Naive thymus-derived CD4-positive, alpha-beta T cell (primary cell): ENCODE measurements at regions of chr2 and their contacts with region 1.

Region 1: GRCh38 chr2:64914735-64915509 is 74.3 kb upstream of the SLC1A4 start:
- DNase-seq: no peak
- ATAC-seq: peak; percentile 51
- H3K4me3 ChIP-seq: no peak overlapping the region
- H3K4me3 Mint-ChIP-seq: no peak overlapping the region
- H3K27ac ChIP-seq: no peak overlapping the region
- H3K27ac Mint-ChIP-seq: peak overlapping the region in 1 of 9 donors; percentile 34
- H3K4me1 ChIP-seq: peaks cover 6 to 15% of the 10 kb centered on the region in 2 donors
- H3K4me1 Mint-ChIP-seq: peaks cover 6 to 33% (median 20%) of the 10 kb centered on the region in 7 donors
- H3K27me3 ChIP-seq: no peaks in the 10 kb centered on the region
- H3K27me3 Mint-ChIP-seq: no peaks in the 10 kb centered on the region

Region 2: GRCh38 chr2:64945973-64946768 is 31.2 kb after region 1 on chr2:
- CTCF ChIA-PET with region 1: interaction called, 4 read pairs
- POLR2A ChIA-PET with region 1: no interaction called
- intact Hi-C with region 1: loop called (anchors 1 to 2 kb)
- DNase-seq: peak; percentile 19 to 74 (median 47)
- ATAC-seq: peak; percentile 93
- H3K4me3 ChIP-seq: peak overlapping the region; percentile 19
- H3K4me3 Mint-ChIP-seq: peak overlapping the region; percentile 65 to 84 (median 80)
- H3K27ac ChIP-seq: peak overlapping the region; percentile 50
- H3K27ac Mint-ChIP-seq: peak overlapping the region; percentile 49 to 94 (median 89)
- H3K4me1 ChIP-seq: peaks cover 21 to 25% of the 10 kb centered on the region in 2 donors
- H3K4me1 Mint-ChIP-seq: peaks cover 29 to 60% (median 42%) of the 10 kb centered on the region in 7 donors
- H3K27me3 ChIP-seq: no peaks in the 10 kb centered on the region
- H3K27me3 Mint-ChIP-seq: no peaks in the 10 kb centered on the region

Region 3: GRCh38 chr2:65033178-65033577 is 118.3 kb after region 1 on chr2:
- CTCF ChIA-PET with region 1: interaction called, 12 read pairs
- POLR2A ChIA-PET with region 1: no interaction called
- intact Hi-C with region 1: loop called in 1 of 2 experiments (anchors 1 kb)
- DNase-seq: peak in 2 of 9 donors; percentile 20 to 25
- ATAC-seq: peak; percentile 28
- H3K4me3 ChIP-seq: no peak overlapping the region
- H3K4me3 Mint-ChIP-seq: no peak overlapping the region
- H3K27ac ChIP-seq: no peak overlapping the region
- H3K27ac Mint-ChIP-seq: peak overlapping the region in 2 of 9 donors; percentile 32 to 64
- H3K4me1 ChIP-seq: peaks cover 17 to 23% of the 10 kb centered on the region in 2 donors
- H3K4me1 Mint-ChIP-seq: peaks cover 23 to 30% (median 28%) of the 10 kb centered on the region in 7 donors
- H3K27me3 ChIP-seq: no peaks in the 10 kb centered on the region
- H3K27me3 Mint-ChIP-seq: no peaks in the 10 kb centered on the region

Region 4: GRCh38 chr2:65056215-65057053 is 141.5 kb after region 1 on chr2 and contains the start of gene CEP68:
- CTCF ChIA-PET with region 1: interaction called, 8 read pairs
- POLR2A ChIA-PET with region 1: no interaction called
- intact Hi-C with region 1: loop called in 1 of 2 experiments (anchors 1 kb)
- DNase-seq: peak; percentile 88 to 96 (median 95)
- ATAC-seq: peak; percentile 96
- H3K4me3 ChIP-seq: peak within 1 kb of the TSS; percentile 54
- H3K4me3 Mint-ChIP-seq: peak within 1 kb of the TSS; percentile 79 to 99 (median 94)
- H3K27ac ChIP-seq: peak within 1 kb of the TSS; percentile 76
- H3K27ac Mint-ChIP-seq: peak within 1 kb of the TSS; percentile 84 to 97 (median 90)
- H3K4me1 ChIP-seq: peaks cover 10 to 42% of the 10 kb centered on the region in 2 donors
- H3K4me1 Mint-ChIP-seq: peaks cover 41 to 81% (median 61%) of the 10 kb centered on the region in 7 donors
- H3K27me3 ChIP-seq: no peaks in the 10 kb centered on the region
- H3K27me3 Mint-ChIP-seq: peaks cover 0 to 2% (median 0%) of the 10 kb centered on the region in 5 donors
- total RNA-seq, gene CEP68: 8.5 to 52.0 (median 20.8) TPM

Region 5: GRCh38 chr2:65142515-65142914 is 227.6 kb after region 1 on chr2:
- CTCF ChIA-PET with region 1: no interaction called
- POLR2A ChIA-PET with region 1: interaction called, 3 read pairs
- intact Hi-C with region 1: loop called in 1 of 2 experiments (anchors 1 kb)
- DNase-seq: no peak
- ATAC-seq: peak; percentile 75
- H3K4me3 ChIP-seq: no peak overlapping the region
- H3K4me3 Mint-ChIP-seq: no peak overlapping the region
- H3K27ac ChIP-seq: no peak overlapping the region
- H3K27ac Mint-ChIP-seq: peak overlapping the region in 1 of 9 donors; percentile 8
- H3K4me1 ChIP-seq: no peaks in the 10 kb centered on the region
- H3K4me1 Mint-ChIP-seq: no peaks in the 10 kb centered on the region
- H3K27me3 ChIP-seq: no peaks in the 10 kb centered on the region
- H3K27me3 Mint-ChIP-seq: peaks cover 0 to 30% (median 4%) of the 10 kb centered on the region in 5 donors

Region 6: DNA sequence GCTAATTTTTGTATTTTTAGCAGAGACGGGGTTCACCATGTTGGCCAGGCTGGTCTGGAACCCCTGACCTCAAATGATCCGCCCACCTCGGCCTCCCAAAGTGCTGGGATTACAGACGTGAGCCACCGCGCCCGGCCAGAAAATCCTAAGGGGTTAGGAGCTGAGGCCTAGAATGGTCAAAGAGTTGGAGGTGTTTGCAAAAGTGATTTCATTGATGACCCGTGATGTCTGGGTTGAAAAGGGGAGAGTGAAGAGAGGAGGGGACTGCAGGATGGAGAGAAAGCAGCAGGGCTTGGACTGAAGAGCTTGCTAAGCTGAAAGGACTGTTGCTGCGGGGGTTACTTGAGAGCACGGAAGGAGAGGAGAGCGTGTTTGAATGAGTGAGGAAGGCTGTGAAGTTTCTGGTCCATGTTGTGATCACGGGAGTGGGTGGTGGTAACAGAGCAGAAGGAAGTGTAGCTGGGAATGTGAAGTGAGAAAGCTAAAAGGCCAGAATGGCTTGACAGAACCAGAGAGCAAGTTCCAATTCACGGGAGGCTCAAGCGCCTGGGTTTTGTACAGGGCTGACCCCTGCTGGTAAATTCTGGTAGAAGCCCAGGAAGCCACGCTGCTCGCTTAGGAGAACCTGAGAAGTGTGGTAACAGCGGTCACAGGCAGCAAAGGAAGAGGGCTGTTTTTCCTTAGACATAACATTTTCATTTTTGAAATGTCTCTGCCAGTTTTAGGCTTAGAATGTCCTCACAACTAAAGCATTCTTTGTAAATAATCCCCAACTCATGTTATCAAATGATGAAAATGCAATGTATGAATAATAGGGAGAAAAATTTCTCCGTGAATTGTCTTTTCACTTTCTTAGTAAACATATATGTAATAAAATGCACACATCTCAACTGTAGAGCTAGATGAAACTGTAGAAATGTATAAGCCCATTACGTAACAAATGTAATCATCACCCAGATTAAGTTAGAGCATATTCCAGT is 272.2 kb after region 1 on chr2:
- CTCF ChIA-PET with region 1: interaction called, 4 read pairs
- POLR2A ChIA-PET with region 1: no interaction called
- intact Hi-C with region 1: loop called (anchors 1 to 2 kb)
- DNase-seq: peak; percentile 23 to 71 (median 57)
- ATAC-seq: peak; percentile 97
- H3K4me3 ChIP-seq: no peak overlapping the region
- H3K4me3 Mint-ChIP-seq: no peak overlapping the region
- H3K27ac ChIP-seq: no peak overlapping the region
- H3K27ac Mint-ChIP-seq: peak overlapping the region in 1 of 9 donors; percentile 3
- H3K4me1 ChIP-seq: no peaks in the 10 kb centered on the region
- H3K4me1 Mint-ChIP-seq: peaks cover 0 to 13% (median 9%) of the 10 kb centered on the region in 7 donors
- H3K27me3 ChIP-seq: peaks cover 0 to 3% of the 10 kb centered on the region in 2 donors
- H3K27me3 Mint-ChIP-seq: peaks cover 4 to 37% (median 12%) of the 10 kb centered on the region in 5 donors